ENCODE measurements at regions of chr17 and their contacts with region 1.

Region 1: DNA sequence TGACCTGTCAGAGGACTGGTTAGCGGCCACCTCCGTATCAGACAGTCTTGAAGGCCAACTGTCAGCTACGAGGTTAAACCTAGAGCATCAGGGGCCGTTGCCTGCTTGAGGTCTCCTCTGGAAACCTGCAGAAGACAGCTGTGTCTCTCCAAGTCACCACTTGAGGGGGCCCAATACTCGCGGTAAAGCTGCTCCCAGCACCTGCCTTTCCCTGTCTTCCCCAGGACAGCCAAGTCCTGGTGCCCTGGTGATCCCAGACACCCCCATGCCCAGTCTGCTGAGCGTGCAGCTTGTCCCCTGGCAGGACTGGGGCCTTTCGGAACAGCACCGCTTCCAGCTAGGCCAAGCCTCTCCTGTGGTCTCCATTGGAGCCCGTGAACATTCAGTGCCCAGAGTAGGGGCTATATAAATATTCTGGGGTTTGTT is 80.1 kb downstream of the DNAH17 start:
- DNase-seq: peak; percentile 83

Region 2: DNA sequence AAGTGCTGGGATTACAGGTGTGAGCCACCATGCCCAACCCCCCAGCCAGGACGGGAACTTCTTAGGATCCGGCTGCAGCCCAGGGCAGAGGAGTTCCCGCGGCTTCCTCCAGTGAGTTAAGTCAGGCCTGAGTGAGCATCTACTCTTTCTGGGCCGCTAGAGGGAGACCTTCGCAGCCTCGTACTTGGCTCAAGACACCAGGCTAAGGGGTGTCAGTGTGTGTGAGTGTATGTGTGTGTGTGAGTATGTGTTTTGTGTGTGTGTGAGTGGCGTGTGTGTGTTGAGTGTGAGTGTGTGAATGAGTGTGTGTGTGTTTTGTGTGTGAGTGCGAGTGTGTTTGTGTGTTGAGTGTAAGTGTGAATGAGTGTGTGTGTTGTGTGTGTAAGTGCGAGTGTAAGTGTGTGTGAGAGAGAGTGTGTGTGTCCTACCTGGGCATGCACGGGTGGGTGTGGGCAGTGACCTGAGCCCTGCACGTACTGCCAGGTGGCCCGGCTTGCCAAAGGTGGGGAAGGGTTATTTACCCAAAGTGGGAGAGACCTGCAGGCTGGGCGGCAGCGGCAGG is 207.2 kb before region 1 on chr17:
- in situ Hi-C with region 1: no loop called
- DNase-seq: peak; percentile 84

Region 3: GRCh38 chr17:78708510-78708973 is 211.4 kb after region 1 on chr17:
- in situ Hi-C with region 1: loop called (anchors 25 kb)
- DNase-seq: peak; percentile 75

Measured in KBM-7 (cell line).